RWPE1 (cell line): ENCODE measurements at regions of chr10 and their contacts with region 1.

Region 1: GRCh38 chr10:101889256-101890210 is 45.9 kb upstream of the KCNIP2 start:
- DNase-seq: peak; percentile 72
- H3K27ac ChIP-seq: no peak overlapping the region
- CTCF ChIP-seq: peak; percentile 62

Region 2: DNA sequence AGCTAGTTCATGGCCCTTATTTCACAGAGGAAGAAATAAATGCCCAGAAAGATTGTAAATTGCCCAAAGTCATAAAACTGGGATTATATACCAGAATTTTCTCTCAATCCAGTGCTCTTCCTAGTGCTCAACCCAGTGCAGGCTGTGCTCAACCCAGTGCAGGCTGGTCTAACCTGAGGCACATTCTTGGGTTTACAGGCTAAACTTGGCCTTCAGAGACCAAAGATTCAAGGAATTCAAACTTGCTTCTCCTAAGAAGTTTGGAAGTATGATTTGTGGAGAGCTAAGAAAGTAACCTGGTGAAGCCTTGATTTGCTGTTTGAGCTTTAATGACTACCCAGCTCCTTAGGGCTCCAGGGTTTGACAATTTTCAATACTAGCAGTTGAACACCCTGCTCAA is 33.7 kb before region 1 on chr10:
- CTCF ChIA-PET with region 1: no interaction called
- POLR2A ChIA-PET with region 1: no interaction called
- DNase-seq: no peak
- H3K27ac ChIP-seq: no peak overlapping the region
- CTCF ChIP-seq: no peak

Region 3: DNA sequence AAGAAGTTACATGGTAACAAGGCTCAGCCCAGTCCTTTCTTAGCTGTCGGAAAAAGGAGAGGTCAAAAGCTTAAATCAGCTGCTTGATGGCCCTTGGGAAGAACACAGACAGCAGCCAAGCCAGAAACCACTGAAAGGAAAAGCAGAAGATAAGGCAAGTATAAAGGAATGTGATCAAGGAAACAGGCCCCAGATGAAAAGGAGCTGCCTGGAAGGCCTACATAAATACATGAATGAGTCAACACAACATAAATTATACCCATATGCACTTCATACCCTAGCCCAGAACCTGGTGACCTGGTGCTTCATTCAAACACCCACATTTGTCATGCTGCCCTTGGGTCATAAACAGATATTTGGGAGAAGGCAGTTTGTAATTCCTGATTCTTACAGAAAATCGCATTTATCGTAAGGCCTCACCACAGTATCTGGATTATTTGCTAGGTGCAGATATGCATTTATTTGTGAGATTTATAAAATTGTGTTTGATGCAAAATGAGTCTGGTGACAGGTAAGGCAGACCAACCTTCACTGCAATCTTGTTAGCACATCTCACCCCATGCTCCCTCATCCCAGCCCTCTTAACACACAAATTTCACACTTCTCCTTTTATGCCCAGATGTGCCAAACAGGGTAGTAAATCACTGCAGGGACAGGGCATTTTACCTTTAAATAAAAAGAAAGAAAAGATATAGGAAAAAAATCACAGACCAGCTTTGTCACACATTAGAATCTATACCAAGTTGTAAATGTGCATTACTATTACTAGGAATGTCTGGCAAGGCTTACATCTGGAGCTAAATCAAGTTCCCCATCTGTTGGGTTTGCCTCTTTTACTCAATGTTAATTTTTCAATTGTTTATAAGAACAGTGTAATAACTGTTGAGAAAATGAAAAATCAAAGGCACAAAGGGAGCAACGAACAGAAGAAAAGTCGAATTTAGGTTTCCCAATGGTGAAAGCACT is 49.1 kb after region 1 on chr10:
- CTCF ChIA-PET with region 1: interaction called, 4 read pairs
- POLR2A ChIA-PET with region 1: interaction called, 11 read pairs
- DNase-seq: peak; percentile 79
- H3K27ac ChIP-seq: no peak overlapping the region
- CTCF ChIP-seq: no peak

Region 4: DNA sequence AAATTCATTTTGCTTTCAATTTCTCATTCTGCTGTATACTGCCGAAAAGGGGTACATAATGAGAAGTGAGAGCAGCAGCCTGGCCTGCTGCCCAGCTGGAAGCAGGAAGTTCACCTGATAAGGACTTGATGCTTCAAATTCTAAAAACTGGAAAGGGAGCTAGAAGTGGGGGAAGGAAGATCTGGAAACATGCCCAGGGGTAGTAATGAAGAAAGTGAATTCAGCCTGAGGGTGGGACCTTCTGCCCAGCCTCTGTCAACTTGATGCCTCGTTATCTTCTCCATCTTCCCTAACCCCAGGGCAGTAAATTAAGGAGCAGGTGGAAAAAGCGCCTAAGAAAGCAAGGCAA is 97.1 kb after region 1 on chr10:
- CTCF ChIA-PET with region 1: interaction called, 3 read pairs
- POLR2A ChIA-PET with region 1: interaction called, 11 read pairs
- DNase-seq: no peak
- H3K27ac ChIP-seq: no peak overlapping the region
- CTCF ChIP-seq: no peak

Region 5: GRCh38 chr10:102009801-102010425 is 120.4 kb after region 1 on chr10:
- CTCF ChIA-PET with region 1: interaction called, 20 read pairs
- POLR2A ChIA-PET with region 1: no interaction called
- DNase-seq: peak; percentile 91
- H3K27ac ChIP-seq: no peak overlapping the region
- CTCF ChIP-seq: peak; percentile 95